Psoas muscle (tissue), 8 donors: ENCODE measurements at regions of chrX and their contacts with region 1.

Region 1: GRCh38 chrX:124435616-124436015 is 89.3 kb downstream of the SH2D1A start:
- DNase-seq: no peak
- ATAC-seq: no peak
- H3K4me3 ChIP-seq: no peak overlapping the region
- H3K27ac ChIP-seq: no peak overlapping the region
- H3K4me1 ChIP-seq: no peaks in the 10 kb centered on the region
- H3K27me3 ChIP-seq: no peaks in the 10 kb centered on the region
- CTCF ChIP-seq: no peak

Region 2: DNA sequence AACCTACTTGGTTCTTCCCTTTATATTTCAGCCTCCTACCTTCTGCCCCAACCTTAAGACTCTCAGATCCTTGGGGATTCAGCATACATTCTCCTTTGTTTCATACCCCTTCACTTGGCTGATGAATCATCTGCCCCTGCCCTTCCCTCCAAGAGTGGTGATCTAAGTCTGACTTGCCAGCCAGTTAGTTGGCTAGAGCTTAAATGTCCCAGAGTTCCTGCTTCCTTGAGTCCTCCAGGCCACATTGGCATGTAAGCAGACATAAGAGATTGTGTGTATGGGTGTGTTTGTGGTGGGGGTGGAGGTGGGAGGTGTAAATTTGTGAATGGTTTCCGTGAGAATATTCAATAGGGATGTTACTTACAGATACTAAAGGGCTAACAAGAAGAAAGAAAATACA is 106.9 kb before region 1 on chrX:
- intact Hi-C with region 1: no loop called
- DNase-seq: no peak
- ATAC-seq: no peak
- H3K4me3 ChIP-seq: no peak overlapping the region
- H3K27ac ChIP-seq: no peak overlapping the region
- H3K4me1 ChIP-seq: no peaks in the 10 kb centered on the region
- H3K27me3 ChIP-seq: no peaks in the 10 kb centered on the region
- CTCF ChIP-seq: no peak

Region 3: DNA sequence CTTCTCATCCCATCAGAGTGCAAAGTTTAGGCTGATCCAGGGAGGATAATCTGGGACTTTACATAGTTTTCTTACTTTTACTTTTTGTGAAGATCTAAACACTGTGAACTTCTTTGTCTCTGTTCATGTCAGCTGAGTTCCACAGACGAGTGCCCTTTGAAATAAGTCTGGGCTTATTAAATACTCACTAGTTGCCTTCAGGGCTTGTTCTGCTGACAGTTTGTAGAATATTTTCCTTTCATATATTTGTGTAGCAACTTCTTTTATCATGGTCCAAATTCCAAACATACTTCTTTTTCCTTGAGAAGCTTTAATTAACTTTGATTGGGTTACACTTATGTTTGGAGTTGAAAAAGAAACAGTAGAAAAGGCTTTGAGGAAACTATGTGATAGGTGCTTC is 20.4 kb after region 1 on chrX:
- intact Hi-C with region 1: loop called in 1 of 2 experiments (anchors 1 kb)
- DNase-seq: no peak
- ATAC-seq: no peak
- H3K4me3 ChIP-seq: no peak overlapping the region
- H3K27ac ChIP-seq: no peak overlapping the region
- H3K4me1 ChIP-seq: no peaks in the 10 kb centered on the region
- H3K27me3 ChIP-seq: no peaks in the 10 kb centered on the region
- CTCF ChIP-seq: no peak